ENCODE measurements at regions of chr2 and their contacts with region 1.

Region 1: GRCh38 chr2:106638043-106638442 is 150.9 kb downstream of the CD8B2 start:
- DNase-seq: no peak

Region 2: GRCh38 chr2:106685180-106685900 is 47.3 kb after region 1 on chr2:
- intact Hi-C with region 1: no loop called
- DNase-seq: no peak

Region 3: DNA sequence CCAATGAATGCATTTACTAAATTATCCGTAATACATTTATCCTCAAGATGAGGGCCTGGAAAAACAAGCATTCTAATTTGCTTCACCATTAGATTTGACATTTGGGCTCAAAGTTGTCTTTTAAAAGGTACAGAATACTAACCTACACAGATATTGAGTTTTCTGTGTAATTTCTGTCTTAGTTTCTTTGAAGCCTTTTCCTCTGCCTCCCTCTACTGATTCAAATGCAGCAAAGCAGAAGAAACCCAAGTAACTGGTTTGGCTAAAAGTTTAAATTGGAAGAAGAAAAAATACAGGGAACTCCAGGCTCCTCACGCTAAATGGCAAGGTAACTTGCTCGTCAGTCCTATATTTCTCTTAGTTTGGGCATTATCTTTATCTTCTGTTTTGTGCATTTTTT is 1294.9 kb after region 1 on chr2:
- intact Hi-C with region 1: loop called (anchors 5 kb)
- DNase-seq: no peak